Gastrocnemius medialis (tissue), 4 donors: ENCODE measurements at regions of chr4 and their contacts with region 1.

Region 1: GRCh38 chr4:123870061-123870876 is 473.7 kb downstream of the SPRY1 start:
- DNase-seq: no peak
- ATAC-seq: no peak
- H3K4me3 ChIP-seq: no peak overlapping the region
- H3K27ac ChIP-seq: peak overlapping the region; percentile 32 to 75 (median 62)
- H3K4me1 ChIP-seq: peaks cover 27 to 30% of the 10 kb centered on the region in 2 donors
- H3K27me3 ChIP-seq: no peaks in the 10 kb centered on the region
- CTCF ChIP-seq: no peak
- POLR2A ChIP-seq: no peak

Region 2: DNA sequence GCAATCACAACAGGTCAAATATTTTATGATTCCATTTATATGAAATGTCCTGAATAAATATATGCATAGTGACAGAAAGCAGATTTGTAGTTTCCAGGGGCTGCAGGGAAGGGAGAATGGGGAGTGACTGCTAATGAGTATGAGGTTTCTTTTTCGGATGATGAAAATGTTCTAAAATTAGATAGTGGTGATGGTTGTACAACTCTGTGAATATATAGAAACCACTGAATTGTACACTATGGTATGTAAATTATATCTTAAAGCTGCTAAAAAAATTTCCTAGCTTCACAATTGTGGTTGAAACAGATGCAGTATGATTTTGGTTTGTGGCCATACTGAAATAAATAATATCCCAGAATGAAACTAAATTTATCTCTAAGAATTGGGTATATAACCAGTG is 1400.8 kb before region 1 on chr4:
- in situ Hi-C with region 1: no loop called
- intact Hi-C with region 1: no loop called
- DNase-seq: no peak
- ATAC-seq: no peak
- H3K4me3 ChIP-seq: no peak overlapping the region
- H3K27ac ChIP-seq: no peak overlapping the region
- H3K4me1 ChIP-seq: no peaks in the 10 kb centered on the region
- H3K27me3 ChIP-seq: no peaks in the 10 kb centered on the region
- CTCF ChIP-seq: no peak
- POLR2A ChIP-seq: no peak

Region 3: DNA sequence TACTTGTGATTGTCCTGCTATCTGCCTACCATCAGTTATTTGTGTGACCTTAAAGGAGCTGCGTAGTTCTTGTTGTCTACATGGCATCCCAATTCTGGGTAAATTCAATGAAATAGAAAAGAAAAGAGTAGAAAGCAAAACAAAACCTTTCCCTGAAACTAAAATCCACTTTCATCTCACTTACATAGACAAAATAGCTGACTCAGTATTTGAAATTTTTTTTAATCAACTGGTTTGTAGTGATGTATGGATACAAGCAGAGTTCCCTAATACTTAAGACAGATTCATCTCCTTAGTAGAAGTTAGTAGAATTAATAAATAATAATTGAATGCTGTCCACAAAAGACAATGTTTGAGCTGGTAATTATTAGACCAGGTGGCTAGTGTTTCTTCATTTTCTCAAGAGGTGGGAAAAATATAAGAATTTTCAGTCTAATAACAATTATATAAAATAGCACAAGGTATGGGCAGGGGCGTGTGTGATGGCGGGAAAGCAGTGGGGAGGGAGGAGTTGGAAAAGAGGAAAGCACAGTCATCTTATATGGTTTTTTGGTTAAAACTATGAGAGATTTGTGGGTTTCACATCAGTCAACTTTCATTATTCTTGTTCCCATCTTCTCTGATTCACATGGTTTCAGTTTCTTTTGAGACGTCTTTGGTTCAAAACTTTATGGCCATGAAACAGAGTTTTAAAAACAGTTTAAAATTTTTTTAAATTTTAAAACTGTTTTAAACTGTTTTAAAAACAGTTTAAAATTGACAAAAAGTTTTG is 198.4 kb before region 1 on chr4:
- in situ Hi-C with region 1: no loop called
- intact Hi-C with region 1: no loop called
- DNase-seq: no peak
- ATAC-seq: no peak
- H3K4me3 ChIP-seq: peak overlapping the region in 1 of 4 donors; percentile 6
- H3K27ac ChIP-seq: peak overlapping the region in 2 of 4 donors; percentile 15 to 70
- H3K4me1 ChIP-seq: peaks cover 12 to 22% of the 10 kb centered on the region in 2 donors
- H3K27me3 ChIP-seq: no peaks in the 10 kb centered on the region
- CTCF ChIP-seq: no peak
- POLR2A ChIP-seq: no peak

Region 4: GRCh38 chr4:123893011-123893981 is 23.0 kb after region 1 on chr4:
- in situ Hi-C with region 1: no loop called
- intact Hi-C with region 1: loop called (anchors 2 kb)
- DNase-seq: peak in 1 of 2 donors; percentile 16
- ATAC-seq: peak; percentile 31 to 61
- H3K4me3 ChIP-seq: peak overlapping the region in 1 of 4 donors; percentile 7
- H3K27ac ChIP-seq: peak overlapping the region; percentile 55 to 73 (median 63)
- H3K4me1 ChIP-seq: peaks cover 49 to 56% of the 10 kb centered on the region in 2 donors
- H3K27me3 ChIP-seq: no peaks in the 10 kb centered on the region
- CTCF ChIP-seq: no peak
- POLR2A ChIP-seq: no peak